Naive thymus-derived CD4-positive, alpha-beta T cell (primary cell): ENCODE measurements at regions of chr17 and their contacts with region 1.

Region 1: GRCh38 chr17:7614422-7615264 is at the start of gene FXR2:
- DNase-seq: peak; percentile 96 to 100 (median 99)
- ATAC-seq: peak; percentile 93
- H3K4me3 ChIP-seq: peak within 1 kb of the TSS; percentile 86
- H3K4me3 Mint-ChIP-seq: peak within 1 kb of the TSS; percentile 85 to 97 (median 92)
- H3K27ac ChIP-seq: peak within 1 kb of the TSS; percentile 81
- H3K27ac Mint-ChIP-seq: peak within 1 kb of the TSS; percentile 89 to 99 (median 97)
- H3K4me1 ChIP-seq: peaks cover 16 to 27% of the 10 kb centered on the region in 2 donors
- H3K4me1 Mint-ChIP-seq: peaks cover 29 to 47% (median 40%) of the 10 kb centered on the region in 7 donors
- H3K27me3 ChIP-seq: no peaks in the 10 kb centered on the region
- H3K27me3 Mint-ChIP-seq: peaks cover 0 to 6% (median 0%) of the 10 kb centered on the region in 5 donors
- total RNA-seq, gene FXR2: 24.6 to 46.9 (median 34.0) TPM

Region 2: DNA sequence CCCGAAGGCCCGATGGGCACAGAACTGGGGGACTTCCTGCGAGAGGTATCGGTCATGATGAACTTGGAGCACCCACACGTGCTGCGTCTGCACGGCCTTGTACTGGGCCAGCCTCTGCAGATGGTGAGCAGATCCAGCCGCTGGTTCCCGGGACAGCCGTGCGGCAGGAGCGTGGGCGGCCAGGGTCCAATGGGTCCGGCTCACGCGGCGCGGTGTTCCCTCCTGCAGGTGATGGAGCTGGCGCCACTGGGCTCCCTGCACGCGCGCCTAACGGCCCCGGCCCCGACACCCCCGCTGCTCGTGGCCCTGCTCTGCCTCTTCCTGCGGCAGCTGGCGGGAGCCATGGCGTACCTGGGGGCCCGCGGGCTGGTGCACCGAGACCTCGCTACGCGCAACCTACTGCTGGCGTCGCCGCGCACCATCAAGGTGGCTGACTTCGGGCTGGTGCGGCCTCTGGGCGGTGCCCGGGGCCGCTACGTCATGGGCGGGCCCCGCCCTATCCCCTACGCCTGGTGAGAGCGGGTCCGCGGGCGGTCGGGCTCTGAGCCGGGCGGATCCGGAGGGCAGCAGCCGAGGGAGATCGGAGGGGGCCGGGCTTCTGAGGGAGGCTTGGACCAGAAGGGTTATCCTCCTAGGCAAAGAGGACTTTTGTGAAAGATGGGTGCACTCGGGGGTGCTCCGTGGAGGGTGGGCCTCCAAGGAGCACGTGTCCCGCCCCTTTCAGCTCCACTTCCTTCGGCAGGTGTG is 230.7 kb before region 1 on chr17:
- CTCF ChIA-PET with region 1: no interaction called
- POLR2A ChIA-PET with region 1: no interaction called
- intact Hi-C with region 1: loop called in 1 of 2 experiments (anchors 5 kb)
- DNase-seq: peak; percentile 74 to 88 (median 86)
- ATAC-seq: peak; percentile 98
- H3K4me3 ChIP-seq: peak overlapping the region; percentile 82
- H3K4me3 Mint-ChIP-seq: peak overlapping the region; percentile 74 to 89 (median 82)
- H3K27ac ChIP-seq: peak overlapping the region; percentile 94
- H3K27ac Mint-ChIP-seq: peak overlapping the region; percentile 73 to 96 (median 94)
- H3K4me1 ChIP-seq: peaks cover 10 to 13% of the 10 kb centered on the region in 2 donors
- H3K4me1 Mint-ChIP-seq: peaks cover 10 to 23% (median 15%) of the 10 kb centered on the region in 7 donors
- H3K27me3 ChIP-seq: peaks cover 0 to 11% of the 10 kb centered on the region in 2 donors
- H3K27me3 Mint-ChIP-seq: peaks cover 27 to 37% (median 33%) of the 10 kb centered on the region in 5 donors

Region 3: GRCh38 chr17:7403977-7404736 is 210.5 kb before region 1 on chr17 and contains the start of gene TMEM256:
- CTCF ChIA-PET with region 1: no interaction called
- POLR2A ChIA-PET with region 1: no interaction called
- intact Hi-C with region 1: loop called in 1 of 2 experiments (anchors 1 kb)
- DNase-seq: peak; percentile 79 to 96 (median 91)
- ATAC-seq: peak; percentile 93
- H3K4me3 ChIP-seq: peak within 1 kb of the TSS; percentile 95
- H3K4me3 Mint-ChIP-seq: peak within 1 kb of the TSS; percentile 87 to 98 (median 96)
- H3K27ac ChIP-seq: peak within 1 kb of the TSS; percentile 78
- H3K27ac Mint-ChIP-seq: peak within 1 kb of the TSS; percentile 91 to 100 (median 96)
- H3K4me1 ChIP-seq: peaks cover 9 to 10% of the 10 kb centered on the region in 2 donors
- H3K4me1 Mint-ChIP-seq: peaks cover 8 to 25% (median 21%) of the 10 kb centered on the region in 7 donors
- H3K27me3 ChIP-seq: no peaks in the 10 kb centered on the region
- H3K27me3 Mint-ChIP-seq: peaks cover 0 to 23% (median 0%) of the 10 kb centered on the region in 5 donors
- total RNA-seq, gene TMEM256: 31.5 to 58.5 (median 48.2) TPM

Region 4: GRCh38 chr17:7583253-7584109 is 31.2 kb before region 1 on chr17 and contains the start of gene MPDU1:
- CTCF ChIA-PET with region 1: interaction called, 4 read pairs
- POLR2A ChIA-PET with region 1: interaction called, 34 read pairs
- intact Hi-C with region 1: loop called in 1 of 2 experiments (anchors 1 kb)
- DNase-seq: peak; percentile 89 to 98 (median 97)
- ATAC-seq: peak; percentile 80
- H3K4me3 ChIP-seq: peak within 1 kb of the TSS; percentile 100
- H3K4me3 Mint-ChIP-seq: peak within 1 kb of the TSS; percentile 89 to 100 (median 99)
- H3K27ac ChIP-seq: peak within 1 kb of the TSS; percentile 95
- H3K27ac Mint-ChIP-seq: peak within 1 kb of the TSS; percentile 98 to 100 (median 100)
- H3K4me1 ChIP-seq: peaks cover 28 to 35% of the 10 kb centered on the region in 2 donors
- H3K4me1 Mint-ChIP-seq: peaks cover 33 to 60% (median 55%) of the 10 kb centered on the region in 7 donors
- H3K27me3 ChIP-seq: no peaks in the 10 kb centered on the region
- H3K27me3 Mint-ChIP-seq: no peaks in the 10 kb centered on the region
- total RNA-seq, gene MPDU1: 25.4 to 79.8 (median 31.4) TPM

Region 5: GRCh38 chr17:7627250-7628121 is 12.8 kb after region 1 on chr17 and contains the start of gene SAT2:
- CTCF ChIA-PET with region 1: interaction called, 7 read pairs
- POLR2A ChIA-PET with region 1: interaction called, 20 read pairs
- intact Hi-C with region 1: loop called in 1 of 2 experiments (anchors 1 kb)
- DNase-seq: peak; percentile 47 to 87 (median 72)
- ATAC-seq: peak; percentile 97
- H3K4me3 ChIP-seq: peak within 1 kb of the TSS; percentile 79
- H3K4me3 Mint-ChIP-seq: peak within 1 kb of the TSS; percentile 90 to 96 (median 94)
- H3K27ac ChIP-seq: peak within 1 kb of the TSS; percentile 93
- H3K27ac Mint-ChIP-seq: peak within 1 kb of the TSS; percentile 75 to 95 (median 87)
- H3K4me1 ChIP-seq: peaks cover 5% of the 10 kb centered on the region in 2 donors
- H3K4me1 Mint-ChIP-seq: peaks cover 7 to 19% (median 17%) of the 10 kb centered on the region in 7 donors
- H3K27me3 ChIP-seq: no peaks in the 10 kb centered on the region
- H3K27me3 Mint-ChIP-seq: no peaks in the 10 kb centered on the region
- total RNA-seq, gene SAT2: 26.5 to 95.0 (median 77.2) TPM

Region 6: DNA sequence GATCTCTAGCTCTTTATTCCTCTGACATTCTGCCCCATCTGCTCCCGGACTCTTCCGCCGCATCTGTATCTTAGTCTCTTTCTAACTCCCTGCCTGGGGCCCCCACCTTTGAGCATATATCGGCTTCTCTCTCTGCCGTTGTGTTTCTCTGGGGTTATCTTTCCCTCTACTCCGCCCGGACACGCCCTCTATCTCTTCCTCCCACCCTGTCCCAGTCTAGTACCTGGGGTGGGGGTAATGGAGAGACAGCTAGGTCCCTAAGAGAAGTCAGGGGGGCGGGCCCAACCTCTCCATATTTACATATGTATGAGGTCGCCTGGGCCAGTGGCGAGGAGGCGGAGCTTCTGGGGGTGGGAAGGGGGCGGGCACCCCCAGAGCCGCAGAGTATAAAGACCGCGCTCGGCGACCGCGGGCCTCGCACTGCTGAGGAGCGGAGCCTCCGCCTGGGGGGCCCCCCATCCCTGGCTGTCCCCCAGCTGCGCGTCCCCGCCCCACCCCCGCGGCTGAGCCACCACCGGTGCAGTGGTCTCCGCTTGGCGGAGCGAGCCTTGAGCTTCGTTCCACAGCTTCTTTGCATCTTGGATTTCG is 36.0 kb after region 1 on chr17 and contains the start of gene ATP1B2:
- CTCF ChIA-PET with region 1: interaction called, 3 read pairs
- POLR2A ChIA-PET with region 1: interaction called, 4 read pairs
- intact Hi-C with region 1: loop called in 1 of 2 experiments (anchors 1 kb)
- DNase-seq: peak; percentile 44 to 89 (median 66)
- ATAC-seq: peak; percentile 95
- H3K4me3 ChIP-seq: peak within 1 kb of the TSS; percentile 60
- H3K4me3 Mint-ChIP-seq: peak within 1 kb of the TSS; percentile 84 to 94 (median 90)
- H3K27ac ChIP-seq: no peak within 1 kb of the TSS
- H3K27ac Mint-ChIP-seq: peak within 1 kb of the TSS in 5 of 9 donors; percentile 7 to 70 (median 59)
- H3K4me1 ChIP-seq: peaks cover 11 to 21% of the 10 kb centered on the region in 2 donors
- H3K4me1 Mint-ChIP-seq: peaks cover 10 to 21% (median 15%) of the 10 kb centered on the region in 7 donors
- H3K27me3 ChIP-seq: peaks cover 0 to 15% of the 10 kb centered on the region in 2 donors
- H3K27me3 Mint-ChIP-seq: peaks cover 28 to 70% (median 39%) of the 10 kb centered on the region in 5 donors
- total RNA-seq, gene ATP1B2: 0.12 to 1.1 (median 0.29) TPM

Region 7: GRCh38 chr17:7844292-7845154 is 229.9 kb after region 1 on chr17:
- CTCF ChIA-PET with region 1: no interaction called
- POLR2A ChIA-PET with region 1: no interaction called
- intact Hi-C with region 1: loop called in 1 of 2 experiments (anchors 5 kb)
- DNase-seq: peak; percentile 74 to 87 (median 79)
- ATAC-seq: peak; percentile 42
- H3K4me3 ChIP-seq: peak overlapping the region; percentile 84
- H3K4me3 Mint-ChIP-seq: peak overlapping the region; percentile 85 to 99 (median 94)
- H3K27ac ChIP-seq: peak overlapping the region; percentile 100
- H3K27ac Mint-ChIP-seq: peak overlapping the region; percentile 90 to 100 (median 99)
- H3K4me1 ChIP-seq: peaks cover 11 to 26% of the 10 kb centered on the region in 2 donors
- H3K4me1 Mint-ChIP-seq: peaks cover 19 to 41% (median 29%) of the 10 kb centered on the region in 7 donors
- H3K27me3 ChIP-seq: no peaks in the 10 kb centered on the region
- H3K27me3 Mint-ChIP-seq: peaks cover 0 to 2% (median 0%) of the 10 kb centered on the region in 5 donors